Gastrocnemius medialis (tissue), 4 donors: ENCODE measurements at regions of chr12 and their contacts with region 1.

Region 1: DNA sequence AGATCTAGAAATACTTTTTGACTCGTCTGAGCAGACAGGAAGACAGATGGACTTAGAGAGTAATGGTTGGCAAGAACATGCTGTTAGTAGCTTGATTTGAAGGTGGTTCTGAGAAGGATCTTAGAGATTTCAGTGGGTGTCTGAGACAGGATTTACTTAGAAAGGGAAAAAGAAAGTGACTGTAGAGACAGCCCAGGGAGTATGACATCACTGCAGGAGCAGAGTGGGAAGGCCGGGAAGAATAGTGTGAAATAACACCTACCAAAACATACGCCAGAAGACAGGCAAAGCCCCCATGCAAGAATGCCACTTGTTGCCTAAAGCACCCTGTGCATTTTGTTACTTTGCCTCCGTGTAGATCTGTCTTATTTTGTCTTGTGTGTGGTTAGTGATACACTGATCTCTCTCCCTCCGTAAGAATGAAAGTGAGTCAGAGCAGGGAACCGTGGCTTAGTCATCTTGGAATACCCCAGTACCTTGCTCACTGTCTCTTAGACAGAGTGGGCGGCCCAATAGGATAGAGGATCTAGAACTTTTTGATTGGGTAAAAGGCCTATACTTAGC is 161.3 kb upstream of the IFNG-AS1 start:
- DNase-seq: peak; percentile 41 to 59
- ATAC-seq: peak; percentile 97 to 98
- H3K4me3 ChIP-seq: peak overlapping the region; percentile 41 to 51 (median 44)
- H3K27ac ChIP-seq: peak overlapping the region; percentile 82 to 88 (median 84)
- H3K4me1 ChIP-seq: peaks cover 15 to 18% of the 10 kb centered on the region in 2 donors
- H3K27me3 ChIP-seq: no peaks in the 10 kb centered on the region
- CTCF ChIP-seq: no peak
- POLR2A ChIP-seq: peak in 1 of 2 donors; percentile 32

Region 2: DNA sequence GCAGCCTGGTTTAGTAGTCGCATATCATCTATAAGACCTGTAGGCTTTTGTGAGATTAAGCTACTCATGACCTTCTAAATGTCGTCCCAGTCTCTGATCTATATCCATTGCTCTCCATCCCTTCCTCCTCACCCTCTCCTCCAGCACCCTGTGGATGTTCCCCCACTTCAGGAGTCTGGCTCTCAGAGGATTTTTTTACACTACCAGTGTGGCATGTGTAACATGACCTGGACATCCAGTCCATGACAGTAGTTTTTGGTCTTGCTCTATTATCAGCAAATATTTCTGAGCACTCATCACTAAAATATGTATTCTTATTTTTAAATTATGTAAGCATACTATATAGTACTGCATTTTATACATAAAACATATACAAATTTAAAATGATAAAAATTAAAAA is 37.2 kb before region 1 on chr12:
- in situ Hi-C with region 1: no loop called
- intact Hi-C with region 1: loop called (anchors 2 kb)
- DNase-seq: no peak
- ATAC-seq: peak in 1 of 2 donors; percentile 59
- H3K4me3 ChIP-seq: no peak overlapping the region
- H3K27ac ChIP-seq: peak overlapping the region in 1 of 4 donors; percentile 26
- H3K4me1 ChIP-seq: peaks cover 39 to 40% of the 10 kb centered on the region in 2 donors
- H3K27me3 ChIP-seq: no peaks in the 10 kb centered on the region
- CTCF ChIP-seq: no peak
- POLR2A ChIP-seq: no peak

Region 3: GRCh38 chr12:67892259-67893021 is 64.5 kb after region 1 on chr12:
- in situ Hi-C with region 1: no loop called
- intact Hi-C with region 1: loop called (anchors 5 kb)
- DNase-seq: no peak
- ATAC-seq: no peak
- H3K4me3 ChIP-seq: no peak overlapping the region
- H3K27ac ChIP-seq: peak overlapping the region; percentile 52 to 69 (median 58)
- H3K4me1 ChIP-seq: peaks cover 23 to 34% of the 10 kb centered on the region in 2 donors
- H3K27me3 ChIP-seq: no peaks in the 10 kb centered on the region
- CTCF ChIP-seq: no peak
- POLR2A ChIP-seq: no peak

Region 4: GRCh38 chr12:67969134-67969802 is 141.4 kb after region 1 on chr12:
- in situ Hi-C with region 1: no loop called
- intact Hi-C with region 1: no loop called
- DNase-seq: no peak
- ATAC-seq: no peak
- H3K4me3 ChIP-seq: no peak overlapping the region
- H3K27ac ChIP-seq: no peak overlapping the region
- H3K4me1 ChIP-seq: no peaks in the 10 kb centered on the region
- H3K27me3 ChIP-seq: no peaks in the 10 kb centered on the region
- CTCF ChIP-seq: no peak
- POLR2A ChIP-seq: no peak